ENCODE measurements at regions of chr5 and their contacts with region 1.

Region 1: DNA sequence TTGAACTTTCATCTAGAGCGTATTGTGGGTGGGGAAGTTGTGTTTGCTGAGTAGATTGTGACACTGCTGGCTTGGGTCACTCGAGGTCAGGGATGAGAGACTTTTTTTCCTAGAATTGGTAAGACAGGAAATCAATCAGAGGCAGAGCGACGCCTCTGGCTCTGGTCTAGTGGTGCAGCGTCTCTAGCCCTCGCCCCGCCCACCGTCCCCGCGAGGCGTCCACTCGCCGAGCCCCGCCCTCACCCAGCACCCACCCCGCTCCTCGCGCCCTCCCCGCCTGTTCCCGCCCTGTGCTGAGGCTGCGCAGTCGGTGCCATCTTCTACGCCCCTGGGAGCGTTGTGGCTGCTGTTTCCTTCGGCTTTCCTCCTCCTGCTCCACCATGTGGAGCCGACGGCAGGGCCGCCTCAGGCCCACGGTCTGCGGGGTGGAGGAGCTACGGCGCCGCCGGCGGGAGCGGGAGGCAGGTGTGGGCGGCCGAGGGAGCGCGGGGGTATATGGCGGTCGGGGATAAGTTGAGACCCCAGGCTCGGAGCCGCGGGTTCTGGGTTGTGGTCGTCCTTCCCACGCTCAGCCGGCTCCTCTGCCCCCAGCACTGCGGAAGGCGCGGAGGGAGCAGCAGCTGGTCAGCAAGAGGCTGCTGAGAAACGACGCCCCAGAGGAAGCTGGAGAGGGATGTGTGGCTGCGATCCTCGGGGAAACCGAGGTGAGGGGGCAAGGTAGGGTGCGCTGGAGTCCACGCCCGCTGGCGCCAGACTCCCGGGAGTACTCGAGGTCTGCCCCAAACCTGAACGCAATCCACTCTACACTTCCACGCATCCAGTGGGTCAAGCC is at the start of gene TMCO6:
- DNase-seq: peak; percentile 86 to 95
- H3K4me3 ChIP-seq: peak within 1 kb of the TSS; percentile 85 to 91 (median 86)
- H3K27ac ChIP-seq: peak within 1 kb of the TSS; percentile 71
- H3K4me1 ChIP-seq: peaks cover 0 to 4% (median 3%) of the 10 kb centered on the region in 4 experiments; a peak in 4 of 7 replicates
- H3K27me3 ChIP-seq: no peaks in the 10 kb centered on the region
- CTCF ChIP-seq: peak; percentile 39 to 66 (median 65)
- EP300 ChIP-seq: no peak
- POLR2A ChIP-seq: peak in 1 of 2 experiments; percentile 76; a peak in 2 of 3 replicates
- RAD21 ChIP-seq: peak; percentile 51 to 60
- total RNA-seq, gene TMCO6: 21.9 and 29.0 TPM in 2 replicates

Region 2: GRCh38 chr5:140547508-140548299 is 91.7 kb before region 1 on chr5 and contains the start of gene EIF4EBP3:
- CTCF ChIA-PET with region 1: interaction called, 9 read pairs
- POLR2A ChIA-PET with region 1: interaction called, 78 read pairs
- DNase-seq: peak; percentile 91 to 95
- H3K4me3 ChIP-seq: peak within 1 kb of the TSS; percentile 34 to 66 (median 44)
- H3K27ac ChIP-seq: peak within 1 kb of the TSS; percentile 73
- H3K4me1 ChIP-seq: peaks cover 0 to 18% (median 6%) of the 10 kb centered on the region in 4 experiments; a peak in 4 of 7 replicates
- H3K27me3 ChIP-seq: no peaks in the 10 kb centered on the region
- CTCF ChIP-seq: peak; percentile 40 to 73 (median 61)
- EP300 ChIP-seq: no peak
- POLR2A ChIP-seq: peak; percentile 72 to 83
- RAD21 ChIP-seq: peak; percentile 35 to 43
- total RNA-seq, gene EIF4EBP3: 8.9 and 11.7 TPM in 2 replicates

Region 3: GRCh38 chr5:140557136-140557805 is 82.1 kb before region 1 on chr5 and contains the start of gene SRA1:
- CTCF ChIA-PET with region 1: interaction called, 12 read pairs
- POLR2A ChIA-PET with region 1: interaction called, 9 read pairs
- DNase-seq: peak; percentile 61 to 95
- H3K4me3 ChIP-seq: peak within 1 kb of the TSS; percentile 61 to 93 (median 64)
- H3K27ac ChIP-seq: peak within 1 kb of the TSS; percentile 85
- H3K4me1 ChIP-seq: peaks cover 0 to 6% (median 5%) of the 10 kb centered on the region in 4 experiments; a peak in 4 of 7 replicates
- H3K27me3 ChIP-seq: no peaks in the 10 kb centered on the region
- CTCF ChIP-seq: no peak
- EP300 ChIP-seq: no peak
- POLR2A ChIP-seq: peak; percentile 97 to 98
- RAD21 ChIP-seq: no peak; a peak in 1 of 4 replicates
- total RNA-seq, gene SRA1: 34.3 and 39.4 TPM in 2 replicates

Region 4: GRCh38 chr5:140609126-140609525 is 30.2 kb before region 1 on chr5:
- CTCF ChIA-PET with region 1: no interaction called
- POLR2A ChIA-PET with region 1: no interaction called
- DNase-seq: no peak
- H3K4me3 ChIP-seq: no peak overlapping the region
- H3K27ac ChIP-seq: no peak overlapping the region
- H3K4me1 ChIP-seq: no peaks in the 10 kb centered on the region
- H3K27me3 ChIP-seq: no peaks in the 10 kb centered on the region
- CTCF ChIP-seq: no peak
- EP300 ChIP-seq: no peak
- POLR2A ChIP-seq: no peak
- RAD21 ChIP-seq: no peak